CD4-positive, alpha-beta memory T cell (primary cell): ENCODE measurements at regions of chr1 and their contacts with region 1.

Region 1: DNA sequence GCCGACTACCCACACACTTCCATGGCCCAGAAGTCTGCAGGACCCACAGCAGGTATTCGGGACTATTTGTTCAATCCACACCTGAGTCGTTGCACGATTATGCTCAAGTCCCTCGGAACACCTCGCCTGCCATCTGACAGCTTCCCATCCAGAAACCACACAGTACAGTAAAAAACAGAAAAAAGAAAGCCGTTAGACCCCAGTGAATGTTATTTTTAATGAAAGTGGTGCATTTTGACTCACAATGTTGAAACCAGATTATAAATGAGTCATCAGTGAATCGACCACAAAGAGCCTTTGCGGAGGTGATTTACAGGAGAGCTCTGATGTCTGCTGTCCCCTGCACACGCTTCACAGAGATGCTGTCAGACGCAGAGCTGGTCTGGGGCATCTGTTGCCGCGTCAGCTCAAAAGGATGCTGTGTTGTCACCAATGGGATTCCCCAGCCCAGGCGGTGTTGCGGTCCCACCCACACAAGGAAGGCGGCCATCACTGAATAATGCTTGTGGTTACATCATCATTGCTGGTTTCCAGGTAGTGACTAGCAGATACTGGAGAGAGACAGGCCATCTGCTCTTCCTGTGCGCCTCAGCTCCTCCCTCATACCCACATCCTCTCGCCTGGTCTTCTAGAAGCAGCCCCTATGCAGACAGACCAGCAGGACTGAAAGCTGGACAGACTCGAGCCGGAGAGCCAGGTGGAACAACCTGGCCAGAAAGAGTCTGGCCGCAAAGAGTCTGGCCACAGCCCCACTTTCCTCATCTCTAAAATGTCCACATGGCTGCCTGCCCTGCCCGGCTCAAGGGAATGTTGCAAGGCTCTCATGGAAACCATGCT is 116.8 kb downstream of the TOMM20 start:
- DNase-seq: peak; percentile 93 to 99 (median 97)
- H3K4me3 ChIP-seq: peak overlapping the region in 1 of 2 donors; percentile 61
- H3K4me3 Mint-ChIP-seq: peak overlapping the region; percentile 75 to 90 (median 82)
- H3K27ac ChIP-seq: peak overlapping the region; percentile 91
- H3K27ac Mint-ChIP-seq: peak overlapping the region; percentile 93 to 99 (median 99)
- H3K4me1 ChIP-seq: peaks cover 45% of the 10 kb centered on the region
- H3K4me1 Mint-ChIP-seq: peaks cover 43 to 73% (median 58%) of the 10 kb centered on the region in 4 donors
- H3K27me3 ChIP-seq: no peaks in the 10 kb centered on the region
- H3K27me3 Mint-ChIP-seq: no peaks in the 10 kb centered on the region

Region 2: GRCh38 chr1:234842726-234843641 is 168.8 kb before region 1 on chr1:
- CTCF ChIA-PET with region 1: no interaction called
- POLR2A ChIA-PET with region 1: interaction called, 11 read pairs
- intact Hi-C with region 1: loop called (anchors 1 kb)
- DNase-seq: peak; percentile 34 to 76 (median 44)
- H3K4me3 ChIP-seq: peak overlapping the region in 1 of 2 donors; percentile 28
- H3K4me3 Mint-ChIP-seq: peak overlapping the region; percentile 33 to 83 (median 58)
- H3K27ac ChIP-seq: peak overlapping the region; percentile 39
- H3K27ac Mint-ChIP-seq: peak overlapping the region; percentile 76 to 91 (median 83)
- H3K4me1 ChIP-seq: peaks cover 65% of the 10 kb centered on the region
- H3K4me1 Mint-ChIP-seq: peaks cover 47 to 73% (median 60%) of the 10 kb centered on the region in 4 donors
- H3K27me3 ChIP-seq: no peaks in the 10 kb centered on the region
- H3K27me3 Mint-ChIP-seq: no peaks in the 10 kb centered on the region

Region 3: DNA sequence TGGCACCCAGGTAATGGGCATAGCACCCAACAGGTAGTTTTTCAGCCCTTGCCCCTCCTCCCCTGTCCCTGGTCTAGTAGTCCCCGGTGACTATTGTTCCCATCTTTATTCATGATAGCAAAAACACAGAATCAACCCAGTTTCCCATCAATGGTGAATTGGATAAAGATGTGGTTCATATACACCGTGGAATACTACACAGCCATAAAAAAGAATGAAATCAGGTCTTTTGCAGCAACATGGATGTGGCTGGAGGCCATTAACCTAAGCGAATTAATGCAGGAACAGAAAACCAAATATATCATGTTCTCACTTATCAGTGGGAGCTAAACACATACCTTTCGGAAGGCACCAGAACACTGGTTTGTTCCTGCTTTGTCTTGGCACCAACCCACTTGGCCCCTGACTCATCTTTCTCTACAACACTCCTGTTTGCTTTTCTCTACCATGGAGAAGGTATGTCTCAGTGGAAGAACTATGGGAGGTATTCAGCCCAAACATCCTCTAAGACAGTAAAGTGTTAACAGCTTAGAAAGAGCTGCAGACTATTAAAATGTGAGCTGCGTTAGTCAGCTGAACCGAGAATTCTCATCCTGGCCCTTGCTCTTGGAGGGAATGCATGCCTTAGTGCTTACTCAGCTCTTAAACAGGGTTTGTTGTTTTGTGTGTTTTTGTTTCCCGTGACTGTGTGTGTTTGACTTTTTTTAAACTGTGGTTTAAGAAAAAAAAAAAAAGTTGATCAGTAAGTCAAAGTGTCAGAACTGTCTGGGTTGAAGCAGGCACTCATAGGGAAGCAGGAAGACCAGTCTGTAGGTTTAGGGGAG is 86.2 kb before region 1 on chr1:
- CTCF ChIA-PET with region 1: no interaction called
- POLR2A ChIA-PET with region 1: interaction called, 12 read pairs
- intact Hi-C with region 1: no loop called
- DNase-seq: peak in 4 of 5 donors; percentile 33 to 55 (median 46)
- H3K4me3 ChIP-seq: peak overlapping the region; percentile 27 to 48
- H3K4me3 Mint-ChIP-seq: peak overlapping the region; percentile 73 to 92 (median 84)
- H3K27ac ChIP-seq: no peak overlapping the region
- H3K27ac Mint-ChIP-seq: peak overlapping the region; percentile 85 to 99 (median 92)
- H3K4me1 ChIP-seq: peaks cover 49% of the 10 kb centered on the region
- H3K4me1 Mint-ChIP-seq: peaks cover 31 to 49% (median 43%) of the 10 kb centered on the region in 4 donors
- H3K27me3 ChIP-seq: no peaks in the 10 kb centered on the region
- H3K27me3 Mint-ChIP-seq: no peaks in the 10 kb centered on the region

Region 4: DNA sequence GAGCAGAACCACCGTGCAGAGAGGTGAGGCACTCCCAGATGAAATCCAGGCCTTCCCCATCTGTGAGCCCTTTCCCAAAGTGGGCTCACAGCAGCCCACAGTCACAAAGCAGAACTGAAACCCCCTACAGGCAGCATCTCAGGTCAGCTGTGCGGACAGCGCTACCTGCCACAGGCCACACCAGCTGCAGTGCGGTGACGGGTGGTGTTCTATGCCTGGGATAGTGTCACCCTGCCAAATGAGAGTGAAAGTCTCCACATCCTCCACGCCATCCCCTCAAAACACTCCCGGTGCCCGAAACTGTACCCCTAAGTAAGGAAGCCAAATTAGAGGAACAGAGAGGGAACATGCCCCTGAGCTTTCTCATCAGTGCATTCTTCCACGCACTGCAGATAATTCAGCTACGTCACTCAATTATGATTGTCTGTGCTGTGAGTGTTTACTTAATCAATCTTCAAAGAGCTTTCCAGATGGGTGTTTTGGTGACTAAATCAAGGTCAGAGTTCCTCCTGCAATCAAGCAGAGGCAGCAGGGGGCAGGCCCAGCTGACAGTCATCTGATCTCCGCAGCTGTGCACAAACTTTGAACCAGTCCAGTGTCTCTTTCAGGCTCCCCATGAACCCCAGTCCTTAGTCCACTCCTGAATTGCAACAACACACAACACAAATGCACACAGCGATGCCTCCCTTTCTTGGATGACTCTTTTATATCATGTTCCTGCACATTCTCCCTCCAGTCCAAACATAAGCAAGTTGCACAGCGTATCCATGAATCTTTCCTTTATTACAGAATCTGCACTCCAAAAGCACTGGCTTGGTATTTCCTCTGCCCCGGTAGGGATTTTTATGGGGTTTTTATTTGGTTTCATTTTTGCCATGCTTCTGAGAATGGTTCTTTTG is 33.2 kb before region 1 on chr1:
- CTCF ChIA-PET with region 1: interaction called, 17 read pairs
- POLR2A ChIA-PET with region 1: interaction called, 78 read pairs
- intact Hi-C with region 1: loop called (anchors 1 kb)
- DNase-seq: peak; percentile 72 to 87 (median 77)
- H3K4me3 ChIP-seq: peak overlapping the region in 1 of 2 donors; percentile 33
- H3K4me3 Mint-ChIP-seq: peak overlapping the region; percentile 43 to 93 (median 79)
- H3K27ac ChIP-seq: peak overlapping the region; percentile 88
- H3K27ac Mint-ChIP-seq: peak overlapping the region; percentile 96 to 99 (median 97)
- H3K4me1 ChIP-seq: peaks cover 65% of the 10 kb centered on the region
- H3K4me1 Mint-ChIP-seq: peaks cover 40 to 83% (median 53%) of the 10 kb centered on the region in 4 donors
- H3K27me3 ChIP-seq: no peaks in the 10 kb centered on the region
- H3K27me3 Mint-ChIP-seq: no peaks in the 10 kb centered on the region

Region 5: DNA sequence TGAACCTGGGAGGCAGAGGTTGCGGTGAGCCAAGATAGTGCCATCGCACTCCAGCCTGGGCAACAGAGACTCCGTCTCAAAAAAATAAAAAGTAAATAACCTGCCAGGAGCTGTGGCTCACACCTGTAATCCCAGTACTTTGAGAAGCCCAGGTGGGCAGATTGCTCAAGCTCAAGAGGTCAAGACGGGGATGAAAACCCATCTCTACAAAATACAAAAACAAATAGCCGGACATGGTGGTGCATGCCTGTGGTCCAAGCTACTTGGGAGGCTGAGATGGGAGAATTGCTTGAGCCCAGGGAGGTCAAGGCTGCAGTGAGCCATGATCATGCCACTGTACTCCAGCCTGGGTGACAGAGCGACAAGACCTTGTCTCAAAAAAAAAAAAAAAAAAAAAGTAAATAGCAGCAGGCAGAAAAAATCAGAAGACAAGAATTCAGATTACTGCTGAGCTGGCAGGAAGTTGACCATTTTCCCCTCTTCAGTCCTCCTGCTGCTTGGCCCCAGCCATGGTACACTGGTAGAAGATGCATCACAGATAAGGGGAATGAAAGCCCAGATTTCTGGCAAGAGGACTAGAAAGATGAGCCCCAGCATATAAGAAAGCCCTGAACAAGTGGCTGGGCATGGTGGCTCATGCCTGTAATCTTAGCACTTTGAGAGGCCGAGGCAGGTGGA is 19.2 kb after region 1 on chr1:
- CTCF ChIA-PET with region 1: no interaction called
- POLR2A ChIA-PET with region 1: no interaction called
- intact Hi-C with region 1: no loop called
- DNase-seq: no peak
- H3K4me3 ChIP-seq: no peak overlapping the region
- H3K4me3 Mint-ChIP-seq: no peak overlapping the region
- H3K27ac ChIP-seq: no peak overlapping the region
- H3K27ac Mint-ChIP-seq: no peak overlapping the region
- H3K4me1 ChIP-seq: no peaks in the 10 kb centered on the region
- H3K4me1 Mint-ChIP-seq: peaks cover 0 to 1% (median 0%) of the 10 kb centered on the region in 4 donors
- H3K27me3 ChIP-seq: no peaks in the 10 kb centered on the region
- H3K27me3 Mint-ChIP-seq: no peaks in the 10 kb centered on the region

Region 6: DNA sequence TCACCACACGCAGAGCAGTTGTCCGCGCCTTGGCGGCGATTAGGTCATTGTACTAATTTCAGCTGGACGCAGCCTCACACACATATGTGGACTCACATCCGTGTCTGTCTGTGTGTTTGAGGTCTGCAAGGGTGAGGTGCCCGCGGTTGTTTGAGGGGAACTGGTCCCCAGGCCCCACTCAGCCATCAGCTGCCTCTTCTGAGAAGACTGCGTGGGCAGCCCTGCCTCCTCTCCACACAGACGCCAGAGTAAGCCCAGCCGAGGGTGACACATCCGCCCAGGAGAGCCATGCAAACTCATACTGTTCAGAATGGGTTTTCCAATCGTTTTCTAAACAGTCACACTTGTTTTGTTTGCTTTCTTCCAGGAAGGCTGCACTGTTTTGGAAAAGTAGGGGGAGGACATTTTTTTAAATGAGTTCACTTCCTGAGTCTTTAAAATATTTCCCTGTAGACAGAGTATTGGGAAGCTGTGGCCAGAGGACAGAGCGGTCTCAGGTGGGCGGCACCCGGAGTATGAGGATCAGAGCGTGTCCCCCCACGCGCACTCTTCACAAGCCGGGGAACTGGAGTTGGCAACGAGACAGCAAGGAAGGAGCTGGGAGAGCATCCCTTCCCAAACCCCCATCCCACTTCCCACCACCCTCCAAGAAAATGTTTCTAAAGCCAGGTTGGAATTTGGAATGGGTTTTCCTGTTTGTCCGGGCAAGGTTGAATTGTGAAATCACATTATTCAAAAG is 63.5 kb after region 1 on chr1:
- CTCF ChIA-PET with region 1: no interaction called
- POLR2A ChIA-PET with region 1: interaction called, 5 read pairs
- intact Hi-C with region 1: loop called (anchors 5 kb)
- DNase-seq: peak; percentile 22 to 66 (median 32)
- H3K4me3 ChIP-seq: peak overlapping the region in 1 of 2 donors; percentile 16
- H3K4me3 Mint-ChIP-seq: peak overlapping the region; percentile 75 to 93 (median 82)
- H3K27ac ChIP-seq: peak overlapping the region; percentile 1
- H3K27ac Mint-ChIP-seq: peak overlapping the region; percentile 22 to 93 (median 88)
- H3K4me1 ChIP-seq: peaks cover 25% of the 10 kb centered on the region
- H3K4me1 Mint-ChIP-seq: peaks cover 23 to 32% (median 27%) of the 10 kb centered on the region in 4 donors
- H3K27me3 ChIP-seq: no peaks in the 10 kb centered on the region
- H3K27me3 Mint-ChIP-seq: no peaks in the 10 kb centered on the region